ENCODE measurements at regions of chr19 and their contacts with region 1.

Region 1: GRCh38 chr19:5547881-5548280 is 19.9 kb downstream of the TINCR start:
- DNase-seq: peak in 1 of 2 experiments; percentile 56
- H3K4me3 ChIP-seq: no peak overlapping the region
- H3K27ac ChIP-seq: no peak overlapping the region
- H3K4me1 ChIP-seq: no peaks in the 10 kb centered on the region
- H3K27me3 ChIP-seq: no peaks in the 10 kb centered on the region
- CTCF ChIP-seq: peak; percentile 73 to 89 (median 79)
- EP300 ChIP-seq: no peak
- POLR2A ChIP-seq: no peak
- RAD21 ChIP-seq: peak; percentile 87 to 88

Region 2: DNA sequence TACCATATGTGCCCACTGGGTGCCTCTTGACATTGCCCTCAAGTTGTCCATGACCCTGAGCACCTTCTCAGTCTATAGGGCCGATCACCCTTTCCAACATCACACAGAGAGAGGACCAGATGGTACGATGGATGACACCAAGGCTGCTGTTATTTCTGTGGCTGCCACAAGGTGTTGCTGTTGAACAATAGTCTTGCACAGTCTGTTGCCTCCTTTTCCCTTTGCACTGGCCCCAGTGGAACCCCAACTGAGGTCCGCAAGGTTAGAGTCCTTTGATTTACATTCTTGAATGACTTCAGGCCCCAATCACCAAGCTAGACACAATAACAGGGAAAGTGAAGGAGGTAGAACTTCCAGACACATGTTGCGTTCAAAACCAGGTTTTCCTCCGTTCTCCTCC is 32.1 kb before region 1 on chr19:
- CTCF ChIA-PET with region 1: interaction called, 29 read pairs
- POLR2A ChIA-PET with region 1: no interaction called
- DNase-seq: peak in 1 of 2 experiments; percentile 60
- H3K4me3 ChIP-seq: no peak overlapping the region
- H3K27ac ChIP-seq: no peak overlapping the region
- H3K4me1 ChIP-seq: no peaks in the 10 kb centered on the region
- H3K27me3 ChIP-seq: no peaks in the 10 kb centered on the region; a peak in 2 of 7 replicates
- CTCF ChIP-seq: peak; percentile 65 to 87 (median 74)
- EP300 ChIP-seq: no peak
- POLR2A ChIP-seq: no peak
- RAD21 ChIP-seq: peak; percentile 73 to 81

Region 3: DNA sequence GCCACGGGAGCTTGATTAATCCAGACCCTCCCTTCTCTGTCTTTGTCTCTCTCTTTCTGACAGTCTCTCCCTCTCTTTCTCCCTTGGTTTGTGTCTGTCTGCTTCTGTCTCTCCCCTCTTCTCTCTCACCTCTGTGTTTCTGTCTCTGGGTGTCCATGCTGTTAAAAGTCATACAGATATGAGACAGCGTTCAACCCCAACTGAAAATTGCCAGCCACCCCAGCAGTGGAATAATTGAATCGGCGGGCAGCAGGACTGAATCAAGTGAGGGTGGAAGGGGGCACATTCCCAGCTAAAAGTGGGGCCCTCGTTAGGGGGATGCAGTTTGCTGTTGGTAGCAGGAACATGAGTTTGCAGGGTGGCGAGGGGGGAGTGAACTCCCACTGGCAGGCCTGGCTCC is 23.8 kb before region 1 on chr19:
- CTCF ChIA-PET with region 1: interaction called, 29 read pairs
- POLR2A ChIA-PET with region 1: no interaction called
- DNase-seq: no peak
- H3K4me3 ChIP-seq: no peak overlapping the region
- H3K27ac ChIP-seq: no peak overlapping the region; the same call in 1 of the 2 replicates
- H3K4me1 ChIP-seq: peaks cover 0 to 8% (median 0%) of the 10 kb centered on the region in 4 experiments; a peak in 6 of 7 replicates
- H3K27me3 ChIP-seq: 0 out of 7 replicates have a peak, but pooled peaks cover 0 to 2% (median 0%) of the 10 kb centered on the region in 4 experiments
- CTCF ChIP-seq: no peak
- EP300 ChIP-seq: no peak
- POLR2A ChIP-seq: no peak
- RAD21 ChIP-seq: no peak

Region 4: GRCh38 chr19:5536337-5536894 is 11.5 kb before region 1 on chr19:
- CTCF ChIA-PET with region 1: interaction called, 35 read pairs
- POLR2A ChIA-PET with region 1: interaction called, 6 read pairs
- DNase-seq: peak; percentile 70 to 91
- H3K4me3 ChIP-seq: peak overlapping the region in 3 of 4 experiments; percentile 19 to 41 (median 29); a peak in 6 of 8 replicates
- H3K27ac ChIP-seq: peak overlapping the region; percentile 41; the same call in 1 of the 2 replicates
- H3K4me1 ChIP-seq: peaks cover 2 to 15% (median 13%) of the 10 kb centered on the region in 4 experiments
- H3K27me3 ChIP-seq: no peaks in the 10 kb centered on the region; a peak in 1 of 7 replicates
- CTCF ChIP-seq: no peak
- EP300 ChIP-seq: no peak; a peak in 1 of 3 replicates
- POLR2A ChIP-seq: no peak; a peak in 1 of 3 replicates
- RAD21 ChIP-seq: 0 out of 4 replicates have a peak, but pooled peaks of 1 of the 2 experiments have one; percentile 0

Region 5: DNA sequence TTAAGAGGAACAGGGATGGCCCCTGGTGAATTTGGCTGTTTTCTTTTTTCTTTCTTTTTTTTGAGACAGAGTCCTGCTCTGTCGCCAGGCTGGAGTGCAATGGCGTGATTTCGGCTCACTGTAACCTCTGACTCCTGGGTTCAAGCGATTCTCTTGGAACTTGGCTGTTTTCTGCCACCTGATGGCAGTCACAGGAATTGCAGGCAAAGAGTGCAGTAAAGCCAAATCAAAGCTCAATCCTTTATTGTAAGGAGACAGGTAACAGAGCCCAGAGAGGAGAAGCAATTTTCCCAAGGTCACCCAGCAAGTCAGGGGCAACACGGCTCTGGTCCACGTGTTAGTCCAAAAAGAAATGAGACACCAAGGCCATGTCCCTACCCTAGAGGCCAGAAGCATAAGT is 13.7 kb after region 1 on chr19:
- CTCF ChIA-PET with region 1: interaction called, 206 read pairs
- POLR2A ChIA-PET with region 1: no interaction called
- DNase-seq: no peak
- H3K4me3 ChIP-seq: no peak overlapping the region
- H3K27ac ChIP-seq: no peak overlapping the region
- H3K4me1 ChIP-seq: peaks cover 0 to 9% (median 4%) of the 10 kb centered on the region in 4 experiments; a peak in 3 of 7 replicates
- H3K27me3 ChIP-seq: peaks cover 0 to 4% (median 1%) of the 10 kb centered on the region in 4 experiments; a peak in 5 of 7 replicates
- CTCF ChIP-seq: peak; percentile 16 to 74 (median 44)
- EP300 ChIP-seq: no peak
- POLR2A ChIP-seq: no peak
- RAD21 ChIP-seq: peak; percentile 41 to 49

Region 6: GRCh38 chr19:5577785-5578493 is 30.1 kb after region 1 on chr19:
- CTCF ChIA-PET with region 1: interaction called, 30 read pairs
- POLR2A ChIA-PET with region 1: no interaction called
- DNase-seq: peak in 1 of 2 experiments; percentile 93
- H3K4me3 ChIP-seq: peak overlapping the region in 2 of 4 experiments; percentile 4 to 39; a peak in 1 of 8 replicates
- H3K27ac ChIP-seq: no peak overlapping the region
- H3K4me1 ChIP-seq: peaks cover 0 to 1% (median 0%) of the 10 kb centered on the region in 4 experiments; a peak in 2 of 7 replicates
- H3K27me3 ChIP-seq: no peaks in the 10 kb centered on the region
- CTCF ChIP-seq: peak; percentile 93 to 98 (median 93)
- EP300 ChIP-seq: no peak
- POLR2A ChIP-seq: no peak
- RAD21 ChIP-seq: peak; percentile 93 to 96

Region 7: DNA sequence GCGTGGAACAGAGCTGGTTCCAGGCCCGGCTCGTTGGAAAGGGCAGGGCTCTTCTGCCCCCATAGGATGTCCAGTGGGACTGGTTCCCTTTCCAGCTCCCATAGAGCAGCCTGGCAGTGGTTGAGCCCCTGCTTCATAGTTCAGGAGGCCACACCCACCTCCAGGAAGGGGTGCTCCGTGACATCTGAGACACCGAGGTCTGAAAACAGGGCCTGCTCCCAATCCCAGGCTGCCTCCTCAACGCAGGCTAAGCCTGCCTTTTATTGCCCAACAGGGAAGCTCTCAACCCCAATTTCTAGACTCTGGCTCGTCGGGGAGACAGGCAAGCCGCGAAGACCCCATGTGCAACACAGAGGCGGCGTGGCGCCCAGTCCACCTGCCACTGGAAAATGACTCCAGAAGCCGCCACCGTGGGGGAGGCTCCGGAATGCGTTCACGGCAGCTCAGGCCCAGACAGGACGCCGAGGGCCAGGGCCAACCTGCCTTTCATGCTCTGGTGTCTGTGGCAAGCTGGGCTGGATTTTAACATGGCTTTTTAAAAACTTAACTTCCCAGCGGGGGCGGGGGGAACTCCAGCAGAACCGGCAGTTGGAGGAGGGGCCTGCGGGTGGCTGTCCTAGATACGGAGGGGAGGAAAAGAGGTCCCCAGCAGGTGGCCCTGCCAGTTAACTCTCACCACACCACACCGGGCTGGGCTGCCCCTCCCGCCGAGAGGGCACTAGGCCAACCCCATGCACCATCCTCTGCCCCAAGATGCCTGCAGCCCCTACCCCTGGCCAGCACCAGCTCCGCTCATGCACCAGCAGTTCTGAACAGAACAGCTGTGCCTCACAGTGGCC is 37.8 kb after region 1 on chr19:
- CTCF ChIA-PET with region 1: interaction called, 30 read pairs
- POLR2A ChIA-PET with region 1: no interaction called
- DNase-seq: peak in 1 of 2 experiments; percentile 85
- H3K4me3 ChIP-seq: peak overlapping the region in 3 of 4 experiments; percentile 6 to 52 (median 24); a peak in 4 of 8 replicates
- H3K27ac ChIP-seq: no peak overlapping the region; the same call in 1 of the 2 replicates
- H3K4me1 ChIP-seq: peaks cover 0 to 21% (median 16%) of the 10 kb centered on the region in 4 experiments; a peak in 6 of 7 replicates
- H3K27me3 ChIP-seq: no peaks in the 10 kb centered on the region
- CTCF ChIP-seq: no peak
- EP300 ChIP-seq: no peak
- POLR2A ChIP-seq: no peak
- RAD21 ChIP-seq: no peak

Region 8: DNA sequence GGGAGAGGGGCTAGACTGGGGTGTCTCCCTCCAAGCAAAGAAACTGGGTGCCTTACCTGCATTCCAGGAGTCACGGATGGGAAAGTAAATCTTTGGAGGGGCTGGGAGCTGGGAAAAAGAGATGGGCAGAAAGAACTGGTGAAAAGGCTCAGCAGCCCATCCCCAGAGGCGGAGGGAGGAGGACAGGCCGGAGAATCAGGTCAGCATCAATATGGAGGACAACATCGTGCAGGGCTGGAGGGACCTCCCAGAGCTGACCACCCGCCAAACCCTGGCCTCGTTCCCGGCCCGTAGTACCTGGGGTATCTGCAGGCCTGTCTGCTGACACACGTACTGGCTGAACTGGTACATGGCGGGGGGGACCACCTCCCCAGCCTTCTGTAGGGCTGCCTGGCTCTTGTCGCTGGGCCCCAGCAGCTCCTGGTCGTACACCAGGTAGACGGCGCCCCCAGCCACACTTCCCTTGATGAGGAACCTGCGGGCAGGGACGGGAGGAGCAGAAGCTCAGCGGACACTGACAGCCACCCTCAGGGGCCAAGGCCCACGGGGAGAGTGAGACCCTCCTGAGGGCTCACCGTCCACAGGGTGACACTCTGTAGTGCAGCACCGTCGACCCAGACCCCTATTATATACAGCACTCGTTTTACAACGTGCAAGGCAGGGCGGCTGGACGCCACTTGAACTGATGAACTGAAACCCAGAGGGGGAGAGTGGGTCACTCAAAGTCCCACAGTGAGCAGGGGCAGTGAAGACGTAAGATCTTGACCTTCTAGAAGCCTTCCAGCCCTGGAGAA is 131.6 kb after region 1 on chr19:
- CTCF ChIA-PET with region 1: no interaction called
- POLR2A ChIA-PET with region 1: no interaction called
- DNase-seq: peak in 1 of 2 experiments; percentile 50
- H3K4me3 ChIP-seq: peak overlapping the region; percentile 58 to 83 (median 76)
- H3K27ac ChIP-seq: 0 out of 2 replicates have a peak overlapping the region, but pooled peaks have one; percentile 69
- H3K4me1 ChIP-seq: peaks cover 0 to 14% (median 2%) of the 10 kb centered on the region in 4 experiments; a peak in 5 of 7 replicates
- H3K27me3 ChIP-seq: no peaks in the 10 kb centered on the region
- CTCF ChIP-seq: no peak
- EP300 ChIP-seq: no peak
- POLR2A ChIP-seq: no peak
- RAD21 ChIP-seq: no peak

Measured in H1 (cell line).